Heart right ventricle (tissue), 16 donors: ENCODE measurements at regions of chr6 and their contacts with region 1.

Region 1: DNA sequence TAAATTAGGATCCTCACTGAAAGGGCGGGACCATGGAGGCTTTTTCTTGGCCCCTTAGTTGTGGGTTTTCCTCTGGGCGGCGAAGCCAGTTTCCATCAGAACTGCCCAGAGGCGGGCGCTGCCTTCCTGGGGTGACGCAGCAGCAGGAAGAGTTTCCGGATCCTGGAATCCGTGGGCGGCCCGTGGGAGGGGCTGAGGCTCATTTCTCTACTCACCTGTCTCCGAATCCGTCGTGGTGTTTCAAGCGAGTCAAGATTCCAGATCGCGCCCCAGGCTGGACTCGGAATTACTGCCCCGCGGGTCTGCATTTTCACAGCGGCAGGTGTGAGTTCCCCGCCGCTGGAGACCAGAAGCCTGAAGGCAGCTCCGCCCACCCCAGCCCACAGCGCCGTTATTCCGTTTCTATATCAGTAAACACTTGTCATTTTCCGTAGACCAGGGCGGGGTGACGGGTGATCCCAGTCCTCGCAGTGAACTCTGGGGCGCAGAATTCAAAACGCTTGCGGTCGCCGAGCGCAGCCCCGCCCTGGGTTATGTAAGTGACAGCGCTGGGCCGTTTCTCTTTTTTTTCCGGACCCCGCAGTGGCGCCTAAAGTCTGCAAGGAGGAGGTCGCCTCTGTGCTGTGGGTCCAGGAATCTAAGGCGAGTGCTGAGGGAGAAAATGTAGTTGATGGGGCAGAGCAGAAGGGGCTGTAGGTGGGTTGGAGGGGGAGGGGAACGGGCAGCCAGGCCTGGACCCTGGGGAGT is 27.2 kb upstream of the POU5F1 start:
- DNase-seq: peak; percentile 88 to 95
- ATAC-seq: peak; percentile 89 to 95 (median 92)
- H3K4me3 ChIP-seq: peak overlapping the region; percentile 47 to 79 (median 64)
- H3K27ac ChIP-seq: peak overlapping the region; percentile 91 to 100 (median 98)
- H3K4me1 ChIP-seq: peaks cover 0 to 43% (median 19%) of the 10 kb centered on the region in 9 donors
- H3K27me3 ChIP-seq: no peaks in the 10 kb centered on the region
- CTCF ChIP-seq: no peak

Region 2: DNA sequence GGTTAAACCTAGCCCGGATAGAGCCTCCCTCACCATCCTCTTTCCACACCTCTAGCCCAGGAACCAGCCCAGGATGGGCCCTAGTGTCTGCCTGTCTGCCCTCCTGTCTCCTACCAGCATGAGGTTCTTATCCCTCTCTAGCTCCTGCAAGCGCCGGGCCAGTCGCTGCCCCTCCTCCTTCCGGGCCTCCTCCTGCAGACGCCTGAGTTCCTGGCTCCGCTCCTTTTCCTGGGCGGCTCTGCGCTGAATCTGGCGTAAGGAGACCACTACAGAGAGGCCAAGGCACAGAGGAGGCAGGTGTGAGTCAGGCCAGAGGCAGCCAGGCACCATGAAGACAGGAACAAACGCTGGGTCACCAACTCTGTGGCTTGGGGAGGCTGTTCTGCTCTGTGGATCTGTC is 54.6 kb before region 1 on chr6:
- intact Hi-C with region 1: loop called in 6 of 10 experiments (anchors 2 to 5 kb)
- DNase-seq: peak; percentile 68 to 72
- ATAC-seq: peak; percentile 55 to 92 (median 87)
- H3K4me3 ChIP-seq: peak overlapping the region in 1 of 10 donors; percentile 2
- H3K27ac ChIP-seq: peak overlapping the region in 7 of 10 donors; percentile 15 to 76 (median 65)
- H3K4me1 ChIP-seq: peaks cover 9 to 40% (median 25%) of the 10 kb centered on the region in 9 donors
- H3K27me3 ChIP-seq: no peaks in the 10 kb centered on the region
- CTCF ChIP-seq: no peak

Region 3: DNA sequence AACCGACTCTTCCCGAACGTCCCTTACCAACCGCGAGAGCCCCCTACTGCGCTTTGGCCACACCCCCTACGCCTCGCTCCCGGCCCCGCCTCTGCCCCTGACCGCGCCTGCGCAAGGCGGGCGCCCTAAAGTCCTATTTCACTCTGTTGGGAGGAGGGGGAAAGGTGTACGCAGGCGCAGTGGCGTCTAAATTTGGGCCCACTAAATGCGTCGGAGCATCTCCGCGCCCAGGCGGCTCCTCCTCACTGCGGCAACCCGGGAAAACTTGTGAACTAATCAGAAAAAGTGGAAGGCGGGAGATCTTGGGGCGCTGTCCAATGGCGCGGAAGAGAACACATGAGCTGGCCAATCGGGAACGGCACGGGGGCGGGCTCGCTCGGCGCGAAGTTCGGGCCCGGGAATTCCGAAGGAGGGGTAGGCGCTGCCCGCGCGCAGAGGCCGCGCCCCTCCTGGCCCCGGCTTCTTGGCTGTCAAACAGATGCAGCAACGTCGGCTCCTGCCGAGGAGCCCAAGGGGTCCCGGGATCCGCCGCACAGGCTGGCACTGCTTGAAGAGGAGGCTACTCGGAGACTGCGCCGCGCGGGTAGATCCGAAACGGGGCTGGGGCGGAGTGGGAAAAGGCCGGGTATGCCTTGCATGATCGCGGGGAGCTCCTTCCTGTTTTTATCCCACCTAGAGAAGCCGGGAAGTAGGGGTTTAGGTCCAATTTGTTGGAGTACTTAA is 39.4 kb before region 1 on chr6 and contains the start of gene TCF19:
- intact Hi-C with region 1: loop called in 1 of 10 experiments (anchors 5 kb)
- DNase-seq: peak; percentile 99
- ATAC-seq: peak; percentile 96 to 98 (median 97)
- H3K4me3 ChIP-seq: peak within 1 kb of the TSS; percentile 32 to 99 (median 68)
- H3K27ac ChIP-seq: peak within 1 kb of the TSS in 9 of 10 donors; percentile 27 to 86 (median 74)
- H3K4me1 ChIP-seq: peaks cover 3 to 32% (median 21%) of the 10 kb centered on the region in 9 donors
- H3K27me3 ChIP-seq: no peaks in the 10 kb centered on the region
- CTCF ChIP-seq: no peak
- total RNA-seq, gene TCF19: 1.6 to 7.3 (median 2.4) TPM

Region 4: DNA sequence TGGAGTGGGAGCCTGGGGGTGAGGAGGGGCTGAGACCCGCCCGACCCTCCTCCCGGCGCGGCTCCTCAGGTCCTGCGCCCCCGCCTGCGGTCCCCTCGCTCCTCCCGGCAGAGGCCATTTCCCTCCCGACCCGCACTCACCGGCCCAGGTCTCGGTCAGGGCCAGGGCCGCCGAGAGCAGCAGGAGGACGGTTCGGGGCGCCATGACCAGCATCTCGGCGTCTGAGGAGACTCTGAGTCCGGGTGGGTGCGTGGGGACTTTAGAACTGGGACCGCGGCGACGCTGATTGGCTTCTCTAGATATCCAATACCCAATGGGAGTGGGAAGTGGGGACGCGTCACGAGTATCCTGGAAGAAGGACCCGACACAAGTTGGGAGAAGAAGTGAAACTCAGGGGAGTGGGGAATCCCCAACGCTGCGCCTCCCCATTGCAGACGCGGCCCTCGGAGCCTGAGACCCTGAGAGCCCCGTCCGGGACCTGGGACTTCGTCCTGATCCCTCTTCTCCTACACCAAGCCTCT is 159.3 kb after region 1 on chr6 and contains the start of gene HLA-B:
- intact Hi-C with region 1: loop called in 3 of 10 experiments (anchors 2 to 10 kb)
- DNase-seq: peak; percentile 88 to 94
- ATAC-seq: peak; percentile 96 to 98 (median 97)
- H3K4me3 ChIP-seq: peak within 1 kb of the TSS; percentile 57 to 98 (median 74)
- H3K27ac ChIP-seq: peak within 1 kb of the TSS in 9 of 10 donors; percentile 79 to 99 (median 90)
- H3K4me1 ChIP-seq: peaks cover 0 to 48% (median 16%) of the 10 kb centered on the region in 9 donors
- H3K27me3 ChIP-seq: peaks cover 0 to 23% (median 0%) of the 10 kb centered on the region in 7 donors
- CTCF ChIP-seq: no peak
- total RNA-seq, gene HLA-B: 252 to 2,676 (median 383) TPM

Region 5: DNA sequence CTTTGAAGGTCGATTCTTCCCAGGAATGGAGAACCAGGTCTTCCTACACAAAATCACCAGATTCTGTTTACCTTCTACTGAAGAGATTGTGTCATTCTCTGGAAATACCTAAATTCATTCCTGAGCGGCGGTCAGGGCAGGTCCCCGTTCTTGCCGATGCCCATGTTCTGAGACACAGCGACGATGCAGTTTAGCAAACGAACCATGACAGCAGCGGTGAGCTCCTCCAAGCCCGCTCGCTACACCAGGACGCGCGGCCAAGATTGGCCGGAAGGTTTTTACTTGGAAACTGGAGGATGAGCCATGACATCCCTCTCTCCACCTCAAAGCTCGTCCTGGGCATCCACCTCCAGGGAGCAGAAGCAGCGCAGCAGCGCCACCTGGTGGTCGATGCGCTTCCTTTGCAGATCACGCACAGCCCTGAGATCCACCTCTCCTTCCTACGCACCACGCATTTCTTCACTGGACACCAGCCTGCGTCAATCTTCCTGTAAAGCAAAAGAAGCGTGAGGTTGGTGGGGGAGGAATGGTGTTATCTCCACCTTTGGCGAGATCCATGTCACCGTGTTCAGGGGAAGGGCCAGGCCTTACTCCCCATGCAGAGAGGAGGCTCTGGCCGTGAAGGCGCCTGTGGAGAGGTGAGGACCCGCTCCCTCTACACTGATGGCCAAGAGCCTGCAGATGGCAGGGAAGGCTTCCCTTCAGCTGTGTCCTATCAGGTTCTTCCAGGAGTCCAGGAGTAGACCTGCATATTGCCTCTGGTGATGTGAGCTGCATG is 169.2 kb after region 1 on chr6:
- intact Hi-C with region 1: loop called (anchors 1 to 10 kb)
- DNase-seq: peak; percentile 82 to 90
- ATAC-seq: peak; percentile 98 to 100 (median 100)
- H3K4me3 ChIP-seq: peak overlapping the region in 8 of 10 donors; percentile 12 to 51 (median 42)
- H3K27ac ChIP-seq: no peak overlapping the region
- H3K4me1 ChIP-seq: peaks cover 0 to 9% (median 0%) of the 10 kb centered on the region in 9 donors
- H3K27me3 ChIP-seq: peaks cover 0 to 34% (median 14%) of the 10 kb centered on the region in 7 donors
- CTCF ChIP-seq: peak; percentile 88 to 97 (median 94)

Region 6: GRCh38 chr6:31441365-31442267 is 243.9 kb after region 1 on chr6:
- intact Hi-C with region 1: loop called in 1 of 10 experiments (anchors 10 kb)
- DNase-seq: peak; percentile 81 to 86
- ATAC-seq: peak; percentile 89 to 99 (median 97)
- H3K4me3 ChIP-seq: peak overlapping the region in 7 of 10 donors; percentile 8 to 38 (median 28)
- H3K27ac ChIP-seq: no peak overlapping the region
- H3K4me1 ChIP-seq: peaks cover 0 to 11% (median 7%) of the 10 kb centered on the region in 9 donors
- H3K27me3 ChIP-seq: peaks cover 0 to 15% (median 0%) of the 10 kb centered on the region in 7 donors
- CTCF ChIP-seq: peak; percentile 70 to 92 (median 89)